ENCODE measurements at regions of chr7 and their contacts with region 1.

Region 1: GRCh38 chr7:49433794-49434193 is 339.6 kb upstream of the VWC2 start:
- DNase-seq: no peak
- ATAC-seq: no peak

Region 2: DNA sequence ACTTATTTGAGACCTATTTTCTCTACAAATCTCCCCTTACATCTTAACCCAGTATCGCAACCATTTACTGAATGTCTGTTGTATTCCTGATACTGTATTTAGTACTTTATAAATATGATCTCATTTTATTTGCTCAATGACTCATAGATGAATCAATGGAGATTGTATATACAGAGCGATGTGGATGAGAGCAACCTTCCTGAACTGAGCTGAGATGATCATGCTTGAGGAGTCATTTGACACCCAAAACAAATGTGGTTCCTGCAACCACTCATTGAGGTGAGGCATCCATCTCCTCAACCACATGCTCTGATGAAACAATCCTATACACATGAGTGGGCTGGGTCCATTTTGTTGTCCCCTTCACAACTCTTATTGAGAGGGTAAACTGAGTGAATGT is 259.4 kb before region 1 on chr7:
- intact Hi-C with region 1: no loop called
- DNase-seq: no peak
- ATAC-seq: no peak

Region 3: GRCh38 chr7:49273897-49274296 is 159.9 kb before region 1 on chr7:
- intact Hi-C with region 1: no loop called
- DNase-seq: no peak
- ATAC-seq: no peak

Region 4: DNA sequence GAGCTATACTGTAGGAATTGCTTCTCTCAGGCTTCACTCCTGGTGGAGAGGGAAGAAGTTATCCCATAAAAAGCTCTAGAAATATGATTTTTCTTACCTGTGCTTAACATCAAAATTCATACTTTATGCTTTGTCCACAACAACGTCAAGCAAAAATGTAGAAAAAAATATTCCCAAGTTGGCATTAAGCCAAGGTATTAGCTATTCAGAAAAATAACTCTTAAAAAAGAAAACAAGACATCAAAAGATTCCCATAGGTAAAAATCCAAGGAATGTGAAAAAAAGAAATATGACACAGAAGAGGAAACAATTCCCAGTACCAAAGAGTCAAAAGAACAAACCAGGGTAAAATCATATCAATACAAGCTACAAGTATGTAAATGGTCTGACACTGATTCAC is 28.1 kb after region 1 on chr7:
- intact Hi-C with region 1: loop called (anchors 2 kb)
- DNase-seq: no peak
- ATAC-seq: no peak

Measured in Right ventricle myocardium superior (tissue), 1 donor.